Common myeloid progenitor, CD34-positive (primary cell): ENCODE measurements at regions of chr17 and their contacts with region 1.

Region 1: GRCh38 chr17:80649678-80650672 is 105.3 kb downstream of the RPTOR start:
- DNase-seq: peak; percentile 54 to 72 (median 69)
- H3K4me3 ChIP-seq: no peak overlapping the region
- H3K27ac ChIP-seq: no peak overlapping the region
- H3K4me1 ChIP-seq: peaks cover 0 to 10% (median 4%) of the 10 kb centered on the region in 4 experiments
- H3K27me3 ChIP-seq: no peaks in the 10 kb centered on the region

Region 2: DNA sequence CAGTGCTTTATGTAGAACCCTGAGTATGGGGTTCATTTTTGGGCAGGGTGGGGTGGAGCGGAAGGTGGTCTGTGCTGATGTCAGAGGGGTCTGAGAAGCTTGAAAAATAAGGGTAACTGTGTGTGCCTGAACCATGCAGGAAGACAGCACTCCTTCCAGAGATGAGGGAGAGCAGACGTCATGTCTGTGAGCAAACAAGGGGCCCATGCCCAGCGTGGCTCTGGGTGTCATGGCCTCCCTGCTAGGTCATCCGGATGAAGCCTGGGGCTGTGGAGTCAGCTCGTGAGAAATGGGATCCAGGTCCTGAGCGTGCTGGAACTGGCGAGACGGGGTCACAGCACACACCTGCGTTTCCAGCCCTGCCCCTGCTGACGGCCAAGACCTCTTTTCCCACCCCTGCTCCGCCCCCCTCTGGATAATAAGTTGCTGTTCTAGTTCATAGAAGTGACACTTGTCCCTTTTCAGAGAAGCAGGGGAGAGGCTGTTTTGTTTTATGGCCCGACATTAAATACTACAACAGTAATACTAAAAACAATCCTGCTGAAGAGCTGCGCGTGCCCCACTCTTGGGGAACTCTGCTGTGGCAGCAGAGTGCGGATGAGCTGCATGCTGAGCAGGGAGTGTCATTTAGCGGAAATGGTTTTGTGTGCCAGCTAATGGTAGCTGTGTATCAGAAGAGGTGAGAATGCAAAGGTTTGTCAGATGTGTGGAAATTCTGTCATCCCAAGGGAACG is 12.8 kb before region 1 on chr17:
- CTCF ChIA-PET with region 1: interaction called, 16 read pairs
- POLR2A ChIA-PET with region 1: no interaction called
- DNase-seq: no peak
- H3K4me3 ChIP-seq: no peak overlapping the region
- H3K27ac ChIP-seq: no peak overlapping the region
- H3K4me1 ChIP-seq: no peaks in the 10 kb centered on the region
- H3K27me3 ChIP-seq: no peaks in the 10 kb centered on the region